ENCODE measurements at regions of chr12 and their contacts with region 1.

Region 1: DNA sequence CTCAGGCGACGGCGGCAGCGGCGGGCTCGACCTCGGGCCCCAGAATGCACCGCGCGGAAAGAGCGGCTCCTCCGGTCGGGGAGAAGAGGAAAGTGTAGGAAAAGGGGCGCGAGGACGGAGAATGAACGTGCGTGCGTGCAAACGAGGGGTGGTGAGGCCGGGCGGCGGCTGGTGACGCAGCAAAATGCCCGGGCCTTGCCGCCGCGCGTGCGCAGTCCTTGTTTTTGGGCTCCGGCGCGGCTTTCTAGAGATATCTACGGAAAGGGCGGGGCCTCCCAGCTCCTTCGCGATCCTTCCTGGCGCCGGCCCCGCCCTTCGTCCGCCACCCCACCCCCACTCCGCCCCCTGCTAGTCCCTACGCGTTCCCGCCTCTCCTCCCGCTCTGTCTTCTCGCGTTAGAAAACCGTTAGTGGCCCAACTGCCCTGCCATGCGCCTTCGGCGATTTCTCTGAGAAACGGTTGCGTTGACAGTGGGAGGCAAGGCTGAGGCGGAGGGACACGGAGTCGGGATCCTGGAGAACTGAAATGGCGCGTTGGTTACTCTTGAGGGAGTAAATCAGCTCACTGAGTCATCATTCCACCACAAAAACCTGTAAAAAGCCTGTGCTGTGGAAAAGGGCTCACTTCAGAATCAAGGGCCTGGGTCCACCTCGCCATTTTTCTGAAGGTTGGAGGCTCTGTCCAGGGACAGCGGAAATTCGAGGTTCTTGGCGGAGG is at the start of gene PTGES3:
- DNase-seq: peak; percentile 99
- H3K4me3 Mint-ChIP-seq: peak within 1 kb of the TSS; percentile 100
- H3K27ac Mint-ChIP-seq: peak within 1 kb of the TSS; percentile 94
- H3K4me1 Mint-ChIP-seq: peaks cover 13% of the 10 kb centered on the region
- H3K27me3 Mint-ChIP-seq: no peaks in the 10 kb centered on the region
- total RNA-seq, gene PTGES3: 355 to 356 TPM

Region 2: GRCh38 chr12:56468216-56469006 is 219.9 kb before region 1 on chr12 and contains the start of gene SPRYD4:
- CTCF ChIA-PET with region 1: no interaction called
- POLR2A ChIA-PET with region 1: no interaction called
- intact Hi-C with region 1: loop called (anchors 5 kb)
- DNase-seq: peak; percentile 96
- H3K4me3 Mint-ChIP-seq: peak within 1 kb of the TSS; percentile 93
- H3K27ac Mint-ChIP-seq: peak within 1 kb of the TSS; percentile 96
- H3K4me1 Mint-ChIP-seq: peaks cover 31% of the 10 kb centered on the region
- H3K27me3 Mint-ChIP-seq: no peaks in the 10 kb centered on the region
- total RNA-seq, gene SPRYD4: 2.4 to 2.9 TPM

Region 3: GRCh38 chr12:56601503-56601902 is 86.8 kb before region 1 on chr12:
- CTCF ChIA-PET with region 1: no interaction called
- POLR2A ChIA-PET with region 1: no interaction called
- intact Hi-C with region 1: no loop called
- DNase-seq: peak; percentile 47
- H3K4me3 Mint-ChIP-seq: no peak overlapping the region
- H3K27ac Mint-ChIP-seq: no peak overlapping the region
- H3K4me1 Mint-ChIP-seq: no peaks in the 10 kb centered on the region
- H3K27me3 Mint-ChIP-seq: no peaks in the 10 kb centered on the region

Region 4: DNA sequence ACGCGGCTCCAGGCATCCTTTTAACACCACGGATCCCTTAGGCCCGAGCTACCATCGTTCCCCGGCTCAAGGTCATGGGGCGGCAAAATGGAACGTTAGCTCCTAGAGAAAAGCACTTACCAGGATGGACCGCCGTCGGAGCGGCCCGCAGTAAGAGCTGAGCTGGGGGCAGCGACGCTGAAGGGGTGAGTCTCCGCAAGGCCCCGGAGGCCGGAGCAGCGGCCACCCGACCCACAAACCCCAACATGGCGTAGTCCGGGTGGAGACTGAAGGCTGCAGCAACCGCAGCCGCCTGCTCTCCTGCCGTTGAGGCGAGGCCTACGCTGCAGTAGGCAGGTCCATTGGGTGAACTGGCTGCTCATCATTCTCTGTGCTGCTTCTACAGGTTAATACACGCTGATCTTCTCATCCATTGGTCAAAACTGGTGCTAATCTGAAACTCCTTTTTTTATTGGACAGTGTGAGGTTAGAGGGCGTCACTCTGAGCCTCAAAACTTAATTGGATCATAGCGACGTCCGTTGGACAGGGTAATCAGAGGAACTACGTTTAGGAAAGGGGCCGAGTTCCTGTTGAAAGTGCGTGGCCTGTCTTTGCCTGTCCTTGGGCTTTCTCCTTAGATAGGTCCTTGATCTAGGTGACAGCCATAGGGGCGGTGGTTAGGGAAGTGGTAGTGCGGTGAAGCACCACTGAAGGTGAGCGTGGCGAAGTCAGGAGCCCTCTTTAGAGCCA is 42.4 kb before region 1 on chr12 and contains the start of gene ATP5F1B:
- CTCF ChIA-PET with region 1: no interaction called
- POLR2A ChIA-PET with region 1: interaction called, 4 read pairs
- intact Hi-C with region 1: loop called (anchors 1 kb)
- DNase-seq: peak; percentile 96
- H3K4me3 Mint-ChIP-seq: peak within 1 kb of the TSS; percentile 96
- H3K27ac Mint-ChIP-seq: peak within 1 kb of the TSS; percentile 98
- H3K4me1 Mint-ChIP-seq: peaks cover 32% of the 10 kb centered on the region
- H3K27me3 Mint-ChIP-seq: no peaks in the 10 kb centered on the region
- total RNA-seq, gene ATP5F1B: 709 to 722 TPM

Region 5: DNA sequence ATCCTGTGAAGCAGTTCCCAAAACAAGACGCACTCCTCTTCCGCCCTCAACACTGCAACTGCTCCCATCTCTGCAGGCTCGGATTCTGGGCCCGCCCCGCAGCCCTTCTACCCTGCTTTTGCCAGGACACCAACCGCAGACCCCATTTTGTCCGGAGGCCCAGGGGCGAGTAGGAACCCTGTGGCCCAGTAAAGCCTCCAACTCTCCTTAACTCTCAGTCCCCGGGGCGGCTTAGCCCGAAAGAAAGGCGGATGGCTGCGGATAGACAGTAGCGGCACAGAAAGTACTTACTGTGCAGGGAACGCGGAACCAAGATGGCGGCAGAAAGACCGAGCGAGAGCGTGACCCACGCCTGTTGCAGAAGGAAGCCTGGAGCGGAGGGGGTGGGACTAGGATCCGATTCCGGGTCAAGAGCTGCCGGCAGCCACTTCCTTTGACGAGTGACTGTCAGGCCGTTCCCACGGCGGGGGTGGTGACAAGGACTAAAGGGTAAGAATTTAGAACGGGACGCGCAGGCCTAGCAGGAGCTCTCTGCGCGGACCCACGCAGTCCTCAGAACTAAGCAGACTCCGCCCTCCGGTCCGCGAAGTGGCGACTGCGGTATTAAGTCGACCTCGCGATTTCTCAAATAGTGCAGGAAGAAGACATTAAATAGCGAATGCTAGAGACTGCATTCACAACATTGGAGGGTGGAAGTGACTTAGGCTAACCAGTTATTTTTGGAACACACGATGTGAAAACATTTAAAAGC is 36.9 kb after region 1 on chr12 and contains the start of gene NACA:
- CTCF ChIA-PET with region 1: interaction called, 4 read pairs
- POLR2A ChIA-PET with region 1: interaction called, 29 read pairs
- intact Hi-C with region 1: loop called (anchors 1 kb)
- DNase-seq: peak; percentile 99
- H3K4me3 Mint-ChIP-seq: peak within 1 kb of the TSS; percentile 96
- H3K27ac Mint-ChIP-seq: peak within 1 kb of the TSS; percentile 94
- H3K4me1 Mint-ChIP-seq: peaks cover 44% of the 10 kb centered on the region
- H3K27me3 Mint-ChIP-seq: no peaks in the 10 kb centered on the region
- total RNA-seq, gene NACA: 1,098 to 1,103 TPM

Region 6: GRCh38 chr12:56839915-56840325 is 151.6 kb after region 1 on chr12:
- CTCF ChIA-PET with region 1: no interaction called
- POLR2A ChIA-PET with region 1: no interaction called
- intact Hi-C with region 1: no loop called
- DNase-seq: peak; percentile 57
- H3K4me3 Mint-ChIP-seq: no peak overlapping the region
- H3K27ac Mint-ChIP-seq: no peak overlapping the region
- H3K4me1 Mint-ChIP-seq: peaks cover 19% of the 10 kb centered on the region
- H3K27me3 Mint-ChIP-seq: no peaks in the 10 kb centered on the region

Region 7: DNA sequence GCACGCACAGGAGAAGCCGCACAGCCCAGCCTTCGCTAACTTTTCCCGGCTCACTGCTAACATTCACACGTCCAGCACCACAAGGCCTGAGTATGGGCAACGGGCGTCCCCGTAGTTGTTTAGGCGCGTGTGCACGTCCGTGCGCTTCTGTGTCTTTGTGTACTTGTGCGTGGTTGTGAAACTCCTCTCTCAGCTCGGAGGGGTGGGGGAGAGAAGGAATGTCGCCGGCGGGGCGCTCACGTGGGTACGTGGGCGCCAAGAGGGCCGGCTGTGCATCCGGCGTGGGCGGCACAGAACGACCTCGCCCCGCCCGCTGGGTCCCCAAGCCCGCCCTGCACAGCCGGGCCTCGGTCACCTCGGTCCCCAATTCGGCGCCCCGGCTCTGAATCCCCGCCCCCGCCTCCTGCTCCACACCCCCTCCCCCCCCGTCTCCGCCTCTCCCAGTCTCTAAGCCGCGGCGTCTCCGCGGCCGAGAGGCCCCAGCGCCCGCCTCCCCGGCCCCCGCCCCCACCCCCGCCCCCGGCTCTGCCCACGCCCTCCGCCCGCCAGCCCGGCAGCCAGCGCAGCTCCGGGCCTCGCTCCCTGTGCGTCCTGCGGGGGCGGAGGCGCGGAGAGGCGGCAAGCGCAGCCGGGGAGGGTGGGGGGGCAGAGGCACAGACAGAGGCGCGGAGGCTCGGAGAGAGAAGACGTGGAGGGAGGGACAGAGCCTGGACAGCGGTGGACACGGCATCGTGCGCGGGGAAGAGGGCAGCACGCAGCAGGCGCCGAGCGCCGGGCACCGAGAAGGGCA is 400.4 kb after region 1 on chr12 and contains the start of gene NAB2:
- CTCF ChIA-PET with region 1: no interaction called
- POLR2A ChIA-PET with region 1: interaction called, 5 read pairs
- intact Hi-C with region 1: loop called (anchors 2 kb)
- DNase-seq: peak; percentile 92
- H3K4me3 Mint-ChIP-seq: peak within 1 kb of the TSS; percentile 91
- H3K27ac Mint-ChIP-seq: peak within 1 kb of the TSS; percentile 95
- H3K4me1 Mint-ChIP-seq: peaks cover 61% of the 10 kb centered on the region
- H3K27me3 Mint-ChIP-seq: no peaks in the 10 kb centered on the region
- total RNA-seq, gene NAB2: 39.6 to 41.6 TPM